ENCODE measurements at regions of chrX and their contacts with region 1.

Region 1: GRCh38 chrX:153909024-153909970 is 4.8 kb downstream of the AVPR2 start:
- DNase-seq: no peak
- ATAC-seq: no peak
- H3K4me3 Mint-ChIP-seq: no peak overlapping the region
- H3K27ac Mint-ChIP-seq: no peak overlapping the region
- H3K4me1 Mint-ChIP-seq: peaks cover 8 to 35% (median 24%) of the 10 kb centered on the region in 4 donors
- H3K27me3 Mint-ChIP-seq: no peaks in the 10 kb centered on the region

Region 2: GRCh38 chrX:153947009-153947769 is 37.9 kb after region 1 on chrX:
- POLR2A ChIA-PET with region 1: interaction called, 14 read pairs
- DNase-seq: peak; percentile 64 to 87 (median 72)
- ATAC-seq: peak; percentile 77 to 78
- H3K4me3 Mint-ChIP-seq: peak overlapping the region in 9 of 10 donors; percentile 18 to 82 (median 64)
- H3K27ac Mint-ChIP-seq: peak overlapping the region; percentile 61 to 97 (median 89)
- H3K4me1 Mint-ChIP-seq: peaks cover 3 to 41% (median 25%) of the 10 kb centered on the region in 4 donors
- H3K27me3 Mint-ChIP-seq: no peaks in the 10 kb centered on the region

Region 3: GRCh38 chrX:153989973-153990655 is 80.8 kb after region 1 on chrX:
- POLR2A ChIA-PET with region 1: no interaction called
- DNase-seq: peak in 3 of 10 donors; percentile 36 to 55 (median 54)
- ATAC-seq: peak; percentile 59 to 74
- H3K4me3 Mint-ChIP-seq: peak overlapping the region; percentile 50 to 85 (median 71)
- H3K27ac Mint-ChIP-seq: peak overlapping the region; percentile 78 to 92 (median 90)
- H3K4me1 Mint-ChIP-seq: peaks cover 3 to 40% (median 24%) of the 10 kb centered on the region in 4 donors
- H3K27me3 Mint-ChIP-seq: no peaks in the 10 kb centered on the region